Posterior cingulate gyrus (tissue), 11 donors: ENCODE measurements at regions of chr12 and their contacts with region 1.

Region 1: GRCh38 chr12:58346032-58346632 is 404.8 kb downstream of the ATP23 start:
- DNase-seq: no peak

Region 2: DNA sequence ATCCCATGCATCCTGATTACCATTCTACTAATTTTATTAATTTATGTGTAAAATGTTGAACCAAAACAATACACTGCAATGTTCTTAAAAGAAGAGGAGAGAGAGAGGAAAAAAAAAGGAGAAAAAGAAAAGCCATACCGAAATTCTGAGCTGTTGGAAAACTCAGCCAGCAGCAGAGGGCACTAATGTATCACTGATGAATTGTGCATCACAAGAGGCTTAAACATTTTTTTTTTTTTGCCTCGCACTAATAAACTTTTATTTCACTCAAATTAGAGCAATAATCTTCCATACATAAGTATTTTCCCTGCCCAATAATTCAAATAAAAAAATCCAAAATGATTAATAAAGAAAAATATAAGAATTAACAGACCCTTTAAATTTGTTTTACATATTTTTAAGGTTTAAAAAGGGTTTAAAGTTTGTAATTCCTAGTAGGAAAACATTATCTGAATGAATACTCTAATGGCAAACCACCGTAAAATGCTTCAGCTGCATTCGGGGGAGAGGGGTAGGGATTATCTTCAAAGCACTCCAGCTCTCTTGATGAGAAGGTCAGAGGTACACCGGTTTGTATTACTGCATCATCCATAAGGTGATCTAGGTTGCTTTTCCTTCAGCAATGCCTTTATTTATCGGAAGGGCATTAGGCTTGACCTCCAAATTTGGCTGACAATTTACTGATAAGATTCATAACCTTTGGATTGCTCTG is 362.8 kb before region 1 on chr12:
- intact Hi-C with region 1: loop called (anchors 5 kb)
- DNase-seq: peak in 3 of 10 donors; percentile 32 to 51 (median 34)

Region 3: DNA sequence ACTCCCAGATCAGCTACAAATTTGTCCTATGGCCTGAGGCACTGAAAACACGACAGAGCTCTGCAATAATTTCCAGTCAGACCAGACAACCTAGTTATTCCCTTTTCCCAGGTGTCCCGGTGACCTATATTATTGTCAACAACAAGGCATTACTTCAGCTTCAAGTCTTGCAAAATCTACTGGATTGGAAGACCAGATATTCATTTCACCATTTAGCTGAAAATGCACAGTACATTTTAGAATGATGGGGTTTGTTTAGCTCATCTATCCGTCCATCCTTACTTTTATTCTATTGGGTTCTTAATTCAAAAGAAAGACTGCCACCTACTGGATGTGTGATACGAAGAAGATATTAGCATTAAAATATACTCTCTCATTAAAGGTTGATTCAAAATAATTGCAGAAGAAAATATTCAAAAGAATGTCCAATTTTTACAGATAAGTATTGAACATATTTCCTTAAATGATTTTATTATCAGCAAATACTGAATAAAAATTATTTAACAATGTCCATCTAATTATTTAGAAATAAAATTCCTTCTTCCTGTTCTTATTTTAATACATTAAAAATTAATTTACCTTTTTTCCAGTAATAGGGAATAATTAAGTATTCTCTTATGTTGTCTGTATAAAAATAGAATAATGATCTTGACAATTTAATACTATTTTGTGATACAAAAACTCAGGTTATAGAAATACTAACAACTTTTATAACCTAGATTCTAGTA is 819.0 kb after region 1 on chr12:
- intact Hi-C with region 1: loop called (anchors 10 kb)
- DNase-seq: no peak